Ovary (tissue), 10 donors: ENCODE measurements at regions of chr18 and their contacts with region 1.

Region 1: DNA sequence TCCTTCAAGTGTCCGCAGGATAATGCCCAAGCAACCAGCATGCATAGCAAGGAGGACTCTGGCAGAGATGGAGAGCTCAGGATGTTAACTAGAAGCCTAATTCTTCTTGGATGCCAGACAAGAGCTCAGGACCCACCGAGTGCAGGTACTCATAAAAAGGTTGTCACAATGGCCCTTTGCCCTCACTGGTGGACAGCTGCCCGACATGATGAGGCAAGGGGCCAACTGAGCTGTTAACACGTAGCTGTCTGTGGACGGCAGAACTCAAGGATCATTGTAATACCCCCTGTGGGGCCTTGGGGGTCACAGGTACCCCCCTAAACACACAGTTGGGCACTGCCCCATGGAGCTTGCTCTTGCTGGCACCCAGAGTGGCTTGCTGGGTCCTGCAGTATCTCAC is 393.7 kb downstream of the PIK3C3 start:
- DNase-seq: no peak
- H3K4me3 ChIP-seq: no peak overlapping the region
- H3K27ac ChIP-seq: no peak overlapping the region
- H3K4me1 ChIP-seq: no peaks in the 10 kb centered on the region
- H3K27me3 ChIP-seq: no peaks in the 10 kb centered on the region
- CTCF ChIP-seq: no peak
- EP300 ChIP-seq: no peak
- POLR2A ChIP-seq: no peak

Region 2: DNA sequence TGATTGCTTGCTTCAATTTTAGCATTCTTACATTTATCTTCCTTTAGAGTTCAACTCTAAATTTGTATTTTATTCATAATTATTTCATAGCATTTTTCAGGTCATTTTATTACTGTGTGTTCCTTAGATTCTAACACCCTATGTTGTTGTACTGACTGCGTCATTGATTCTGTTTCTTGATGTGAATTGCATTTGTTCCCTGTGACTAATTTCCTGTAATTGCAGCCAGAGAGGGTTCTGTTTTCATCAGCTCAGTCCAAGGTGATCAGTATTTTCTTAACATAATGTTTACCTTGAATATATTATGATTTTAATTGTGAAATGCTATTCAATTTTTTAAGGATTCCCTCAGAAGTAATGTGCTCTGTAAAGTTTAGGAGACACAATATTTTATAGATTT is 1363.9 kb before region 1 on chr18:
- intact Hi-C with region 1: no loop called
- DNase-seq: no peak
- H3K4me3 ChIP-seq: no peak overlapping the region
- H3K27ac ChIP-seq: no peak overlapping the region
- H3K4me1 ChIP-seq: no peaks in the 10 kb centered on the region
- H3K27me3 ChIP-seq: no peaks in the 10 kb centered on the region
- CTCF ChIP-seq: no peak
- EP300 ChIP-seq: no peak
- POLR2A ChIP-seq: no peak

Region 3: DNA sequence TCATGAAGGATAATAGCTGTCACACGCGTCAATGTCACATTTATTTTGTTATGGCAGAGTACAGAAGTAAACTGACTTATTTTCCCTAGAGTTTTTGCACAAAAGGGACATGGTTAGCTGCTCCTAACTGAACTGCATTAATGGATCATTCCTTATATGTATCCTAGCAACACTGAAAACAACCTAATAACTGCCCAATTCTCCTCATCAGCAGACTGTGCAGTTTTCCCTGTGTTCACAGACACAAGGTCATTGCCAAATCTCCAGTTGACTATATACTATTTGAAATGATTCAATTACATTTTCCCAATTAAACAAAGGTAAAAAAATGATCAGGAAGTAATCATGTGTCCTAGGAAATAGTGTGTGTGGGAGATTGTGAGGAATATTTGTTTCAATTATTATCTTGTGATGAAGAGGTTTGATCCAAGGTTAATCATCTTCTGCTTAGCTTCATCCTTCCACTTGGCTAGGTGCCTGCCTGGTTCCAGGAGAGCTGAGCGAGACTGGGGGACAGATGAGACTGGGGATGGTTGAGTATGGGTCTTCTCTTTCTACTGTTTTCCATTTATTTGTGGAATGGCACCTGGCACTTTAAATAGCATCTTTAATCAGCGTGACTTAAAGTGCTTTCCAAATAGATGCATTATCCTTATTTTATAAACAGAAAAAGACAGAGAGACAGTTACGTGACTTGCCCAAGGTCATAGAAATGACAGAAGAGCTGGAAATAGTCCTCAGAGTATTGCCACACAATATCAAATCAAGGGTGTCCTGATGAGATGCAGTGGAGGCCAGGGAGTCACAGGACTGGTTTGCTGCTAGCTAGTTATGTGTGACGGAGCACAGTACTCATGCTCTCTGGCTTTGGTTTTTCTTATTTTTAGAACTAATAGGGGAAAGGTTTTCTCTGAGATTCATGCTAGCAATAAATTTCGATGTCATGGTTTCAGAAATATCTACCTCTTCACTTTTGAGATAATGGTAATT is 58.1 kb before region 1 on chr18:
- intact Hi-C with region 1: no loop called
- DNase-seq: no peak
- H3K4me3 ChIP-seq: no peak overlapping the region
- H3K27ac ChIP-seq: no peak overlapping the region
- H3K4me1 ChIP-seq: no peaks in the 10 kb centered on the region
- H3K27me3 ChIP-seq: no peaks in the 10 kb centered on the region
- CTCF ChIP-seq: no peak
- EP300 ChIP-seq: no peak
- POLR2A ChIP-seq: no peak

Region 4: GRCh38 chr18:42334931-42335330 is 13.8 kb before region 1 on chr18:
- intact Hi-C with region 1: loop called in 1 of 4 experiments (anchors 2 kb)
- DNase-seq: no peak
- H3K4me3 ChIP-seq: no peak overlapping the region
- H3K27ac ChIP-seq: no peak overlapping the region
- H3K4me1 ChIP-seq: no peaks in the 10 kb centered on the region
- H3K27me3 ChIP-seq: no peaks in the 10 kb centered on the region
- CTCF ChIP-seq: no peak
- EP300 ChIP-seq: no peak
- POLR2A ChIP-seq: no peak

Region 5: DNA sequence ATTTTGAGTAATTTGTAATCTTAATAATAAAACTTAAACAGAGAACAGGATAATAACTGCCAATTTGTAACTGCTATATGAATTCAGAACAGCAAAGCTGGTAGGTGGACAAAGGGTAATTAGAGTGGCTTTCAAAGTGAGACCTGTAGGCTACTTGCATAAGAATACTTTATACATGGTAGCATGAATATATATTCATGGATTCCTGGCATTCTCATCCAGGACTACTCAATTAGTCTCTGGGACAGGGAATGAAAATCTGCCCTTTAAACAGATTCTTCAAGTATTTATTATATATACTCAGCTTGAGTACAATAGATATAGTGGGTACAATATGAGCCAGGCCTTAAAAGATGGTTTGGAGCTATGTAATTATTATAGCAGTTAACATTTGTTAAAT is 26.2 kb after region 1 on chr18:
- intact Hi-C with region 1: no loop called
- DNase-seq: no peak
- H3K4me3 ChIP-seq: no peak overlapping the region
- H3K27ac ChIP-seq: no peak overlapping the region
- H3K4me1 ChIP-seq: no peaks in the 10 kb centered on the region
- H3K27me3 ChIP-seq: no peaks in the 10 kb centered on the region
- CTCF ChIP-seq: no peak
- EP300 ChIP-seq: no peak
- POLR2A ChIP-seq: no peak